ENCODE measurements at regions of chr18 and their contacts with region 1.

Region 1: DNA sequence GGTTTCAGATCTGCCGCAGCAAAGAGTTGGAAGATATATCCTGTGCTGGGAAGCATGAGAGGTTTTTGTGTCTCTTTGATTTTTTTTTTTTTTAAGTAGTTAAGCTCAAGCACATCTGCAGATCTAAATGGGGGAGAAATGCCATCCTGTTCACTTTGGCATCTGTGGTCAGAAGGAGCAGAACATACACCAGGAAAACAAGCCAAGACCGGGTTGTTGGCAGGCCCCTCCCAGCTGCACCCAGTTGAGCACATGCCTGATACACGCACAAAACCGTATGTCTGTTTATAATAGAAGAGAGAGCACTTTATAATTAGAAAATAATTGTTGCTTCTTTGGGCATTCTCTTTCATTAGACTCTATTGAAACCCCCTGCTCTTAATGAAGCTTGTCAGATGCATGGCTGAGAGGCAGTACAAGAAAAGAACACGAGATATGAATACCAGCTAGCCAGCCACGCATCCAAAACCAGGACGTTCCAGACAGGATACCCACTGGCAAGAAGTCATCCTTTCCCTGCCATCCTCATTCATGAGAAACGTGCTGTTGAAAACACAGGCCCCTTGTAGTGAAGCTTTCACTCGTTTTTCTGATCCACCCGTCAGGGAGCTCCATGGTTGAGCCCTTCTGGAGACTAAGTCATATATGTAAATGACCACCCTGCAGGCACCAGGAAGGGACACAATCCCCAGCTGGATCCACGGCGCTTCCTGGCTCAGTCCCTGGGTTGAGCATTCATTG is 152.2 kb downstream of the ALPK2 start:
- DNase-seq: no peak
- H3K4me3 ChIP-seq: no peak overlapping the region
- H3K27ac ChIP-seq: no peak overlapping the region
- H3K4me1 ChIP-seq: peaks cover 6% of the 10 kb centered on the region
- H3K27me3 ChIP-seq: no peaks in the 10 kb centered on the region
- CTCF ChIP-seq: no peak

Region 2: GRCh38 chr18:58381676-58382411 is 94.8 kb before region 1 on chr18:
- CTCF ChIA-PET with region 1: no interaction called
- dilution Hi-C with region 1: loop called (anchors 5 kb)
- in situ Hi-C with region 1: no loop called
- intact Hi-C with region 1: no loop called
- DNase-seq: no peak
- H3K4me3 ChIP-seq: no peak overlapping the region
- H3K27ac ChIP-seq: no peak overlapping the region
- H3K4me1 ChIP-seq: no peaks in the 10 kb centered on the region
- H3K27me3 ChIP-seq: no peaks in the 10 kb centered on the region
- CTCF ChIP-seq: no peak

Region 3: DNA sequence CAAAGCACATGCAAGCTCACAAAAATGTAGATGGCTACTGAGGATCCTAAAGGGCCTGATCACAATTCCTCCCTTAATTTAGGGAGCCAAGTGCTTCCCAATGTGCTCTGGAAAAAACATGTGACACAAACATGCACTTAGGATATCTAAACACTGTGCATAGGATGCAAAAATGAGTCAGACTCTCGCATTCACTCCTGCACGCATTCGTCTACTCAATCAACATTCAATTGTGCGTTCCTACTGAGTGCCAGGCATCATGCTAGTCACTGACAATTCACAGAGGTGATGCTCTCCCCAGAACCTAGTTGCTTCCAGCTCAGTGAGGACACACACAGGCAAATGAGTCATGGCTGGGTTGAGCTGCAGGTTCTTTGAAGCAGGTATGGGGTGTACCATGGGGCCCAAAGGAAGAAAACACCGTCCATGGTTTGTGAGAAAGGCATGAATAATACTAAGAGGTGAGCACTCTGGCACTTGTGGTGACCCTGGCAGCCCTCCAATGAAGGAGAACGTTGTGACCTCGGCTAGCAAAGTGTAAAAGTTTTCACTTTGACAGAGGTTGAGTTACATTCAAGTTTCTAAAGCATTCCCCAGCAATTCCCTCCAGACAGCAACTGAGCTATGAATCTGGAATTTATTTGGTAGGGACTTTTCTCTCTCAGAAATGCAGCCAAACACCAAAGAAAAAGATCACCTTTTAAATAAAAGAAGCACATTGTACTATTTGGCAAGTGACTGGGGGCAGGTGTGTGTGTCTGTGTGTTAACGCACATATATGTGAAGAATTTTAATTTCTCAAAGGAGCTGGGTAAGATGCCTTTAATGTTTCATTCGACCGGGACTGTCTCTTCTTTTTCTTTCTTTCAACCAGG is 21.1 kb before region 1 on chr18:
- CTCF ChIA-PET with region 1: interaction called, 13 read pairs
- dilution Hi-C with region 1: no loop called
- in situ Hi-C with region 1: no loop called
- intact Hi-C with region 1: no loop called
- DNase-seq: peak; percentile 68
- H3K4me3 ChIP-seq: no peak overlapping the region
- H3K27ac ChIP-seq: no peak overlapping the region
- H3K4me1 ChIP-seq: peaks cover 13% of the 10 kb centered on the region
- H3K27me3 ChIP-seq: no peaks in the 10 kb centered on the region
- CTCF ChIP-seq: no peak

Measured in mammary epithelial cell (primary cell).